ENCODE measurements at regions of chr11 and their contacts with region 1.

Region 1: DNA sequence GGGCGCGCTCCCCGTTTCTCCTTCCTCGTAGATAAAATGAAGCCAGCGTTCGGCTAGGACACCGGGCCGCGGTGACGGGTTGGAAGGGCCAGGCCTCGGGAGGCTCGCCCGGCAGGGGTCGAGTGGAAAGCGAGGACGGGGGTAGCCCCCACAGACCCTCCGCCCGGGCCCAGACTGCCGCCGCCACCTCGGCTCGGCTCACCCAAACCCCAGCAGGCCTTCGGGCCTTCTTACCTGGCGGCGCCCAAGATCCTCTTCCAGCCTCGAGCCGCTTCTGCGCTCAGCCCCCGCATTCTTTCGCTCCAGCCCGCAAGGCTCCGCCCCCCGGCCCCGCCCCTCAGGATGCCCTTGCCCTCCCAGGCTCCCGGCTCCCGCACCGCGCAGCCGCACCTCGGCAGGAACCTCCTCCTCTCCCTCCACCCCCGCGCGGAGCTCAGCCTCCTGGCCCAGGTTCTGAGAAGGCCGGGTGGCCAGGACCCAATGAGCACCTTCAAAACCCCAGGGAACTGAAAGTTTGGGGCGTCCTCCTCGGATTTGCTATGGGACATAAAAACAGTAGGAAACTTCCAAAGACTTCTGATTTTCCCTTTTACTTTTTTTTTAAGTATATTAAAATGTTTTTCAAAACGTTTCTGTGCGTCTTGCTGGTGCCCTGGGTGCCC is at the start of gene CD59:
- DNase-seq: peak; percentile 96
- H3K4me3 ChIP-seq: peak within 1 kb of the TSS; percentile 74 to 98 (median 95)
- H3K27ac ChIP-seq: peak within 1 kb of the TSS; percentile 93
- H3K4me1 ChIP-seq: peaks cover 43% of the 10 kb centered on the region
- H3K27me3 ChIP-seq: no peaks in the 10 kb centered on the region
- CTCF ChIP-seq: no peak
- POLR2A ChIP-seq: peak; percentile 93
- total RNA-seq, gene CD59: 1,084 and 1,141 TPM in 2 replicates

Region 2: DNA sequence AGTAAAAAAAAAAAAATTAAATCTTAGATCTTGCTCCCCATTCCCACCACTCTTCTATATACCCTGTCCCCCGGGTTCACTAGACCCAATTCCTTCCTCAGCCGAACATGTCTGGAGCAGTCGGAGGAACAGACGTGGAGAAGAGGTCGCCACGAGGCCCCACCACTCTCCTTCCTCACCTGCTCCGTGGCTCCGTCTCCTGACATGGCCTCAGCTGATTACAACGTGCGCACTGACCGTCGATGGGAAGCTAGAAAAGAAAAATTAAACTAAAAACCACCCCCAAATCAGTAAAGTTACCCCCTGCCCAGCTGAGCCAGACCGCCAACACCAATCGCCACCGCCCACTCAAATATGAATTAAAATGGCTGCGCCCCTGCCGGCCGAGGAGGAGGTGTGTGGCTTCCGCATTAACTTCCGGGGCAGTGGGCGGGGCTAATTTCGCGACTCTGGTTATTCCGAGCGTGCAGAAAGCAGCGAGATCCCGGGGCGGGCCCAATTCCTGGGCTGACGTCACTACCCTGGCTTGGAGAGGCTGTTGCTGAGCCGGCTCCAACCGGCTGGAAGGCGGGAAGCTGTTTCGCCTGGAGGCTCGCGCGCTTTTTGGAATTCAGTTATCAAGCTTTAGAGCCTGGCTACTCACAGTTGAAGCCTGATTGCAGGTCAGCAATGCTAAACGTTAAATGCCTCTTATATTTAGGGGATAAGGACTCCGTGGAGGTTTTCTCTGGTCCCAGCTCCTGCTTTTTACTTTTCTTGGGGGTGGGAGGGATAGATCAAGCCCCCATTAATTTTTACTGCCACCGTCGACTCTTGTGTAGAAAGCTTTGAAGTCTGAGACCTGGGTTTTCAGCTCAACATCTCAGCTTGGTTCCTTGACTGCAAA is 574.9 kb before region 1 on chr11 and contains the start of gene CSTF3:
- CTCF ChIA-PET with region 1: no interaction called
- POLR2A ChIA-PET with region 1: no interaction called
- dilution Hi-C with region 1: no loop called
- intact Hi-C with region 1: loop called (anchors 5 kb)
- DNase-seq: peak; percentile 99
- H3K4me3 ChIP-seq: peak within 1 kb of the TSS; percentile 62 to 100 (median 100)
- H3K27ac ChIP-seq: peak within 1 kb of the TSS; percentile 92
- H3K4me1 ChIP-seq: peaks cover 23% of the 10 kb centered on the region
- H3K27me3 ChIP-seq: no peaks in the 10 kb centered on the region
- CTCF ChIP-seq: peak; percentile 18 to 38
- POLR2A ChIP-seq: peak; percentile 95
- total RNA-seq, gene CSTF3: 46.6 and 52.3 TPM in 2 replicates

Region 3: GRCh38 chr11:33257897-33258630 is 478.2 kb before region 1 on chr11:
- CTCF ChIA-PET with region 1: no interaction called
- POLR2A ChIA-PET with region 1: no interaction called
- dilution Hi-C with region 1: no loop called
- intact Hi-C with region 1: loop called (anchors 5 kb)
- DNase-seq: peak; percentile 82
- H3K4me3 ChIP-seq: peak overlapping the region; percentile 59 to 93 (median 88)
- H3K27ac ChIP-seq: peak overlapping the region; percentile 98
- H3K4me1 ChIP-seq: peaks cover 18% of the 10 kb centered on the region
- H3K27me3 ChIP-seq: no peaks in the 10 kb centered on the region
- CTCF ChIP-seq: peak; percentile 7 to 29
- POLR2A ChIP-seq: no peak

Region 4: DNA sequence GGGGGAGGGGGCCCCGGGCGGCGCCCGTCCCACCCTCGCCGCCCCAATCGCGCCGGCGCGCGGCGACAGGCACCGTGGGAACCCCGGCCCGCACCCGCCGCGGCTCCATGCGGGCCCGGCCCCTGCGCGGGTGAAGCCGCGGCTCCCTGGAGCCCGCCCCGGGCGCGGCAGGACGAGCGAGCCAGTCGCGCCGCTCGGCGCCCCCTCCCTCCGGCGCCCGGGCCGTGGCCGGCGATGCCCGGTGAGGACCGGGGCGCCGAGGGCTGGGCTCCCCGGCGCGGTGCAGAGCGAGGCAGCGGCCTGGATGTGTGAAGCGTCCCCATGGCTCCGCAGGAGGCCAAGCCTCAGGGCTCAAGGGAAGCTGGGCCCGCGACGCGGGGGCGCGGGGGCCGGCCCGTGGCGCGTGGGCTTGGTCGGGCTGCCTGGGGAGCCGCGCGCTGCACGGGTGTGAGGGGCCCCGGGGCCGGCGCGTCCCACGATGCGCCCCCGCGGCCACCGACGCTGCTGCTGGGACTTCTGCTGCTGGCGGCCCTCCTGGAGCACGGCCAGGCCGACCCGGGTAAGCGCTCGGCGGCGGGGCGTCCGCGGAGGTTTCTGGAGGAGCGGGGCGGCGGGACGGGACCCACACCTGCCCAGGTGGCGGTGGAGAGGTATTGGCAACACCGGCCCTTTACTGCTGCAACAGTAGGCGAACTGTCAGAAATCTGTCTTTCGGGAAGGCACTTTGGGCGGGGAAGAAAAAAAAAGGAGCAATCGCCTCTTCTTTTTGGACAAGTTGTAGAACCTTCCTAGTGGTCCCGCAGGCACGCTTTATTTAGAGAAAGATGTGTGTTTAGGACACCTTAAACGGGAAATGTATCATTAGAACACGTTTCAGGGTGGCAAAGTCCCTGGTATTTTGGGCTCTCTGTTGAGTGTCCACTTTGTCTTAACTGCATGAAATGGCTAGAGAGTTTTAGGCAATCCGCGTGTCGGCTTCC is 359.7 kb before region 1 on chr11:
- CTCF ChIA-PET with region 1: interaction called, 4 read pairs
- POLR2A ChIA-PET with region 1: no interaction called
- dilution Hi-C with region 1: no loop called
- intact Hi-C with region 1: loop called (anchors 5 kb)
- DNase-seq: peak; percentile 25
- H3K4me3 ChIP-seq: peak overlapping the region; percentile 68 to 84 (median 79)
- H3K27ac ChIP-seq: peak overlapping the region; percentile 70
- H3K4me1 ChIP-seq: peaks cover 45% of the 10 kb centered on the region
- H3K27me3 ChIP-seq: no peaks in the 10 kb centered on the region
- CTCF ChIP-seq: no peak
- POLR2A ChIP-seq: no peak

Region 5: GRCh38 chr11:33435216-33435615 is 301.1 kb before region 1 on chr11:
- CTCF ChIA-PET with region 1: no interaction called
- POLR2A ChIA-PET with region 1: no interaction called
- dilution Hi-C with region 1: no loop called
- intact Hi-C with region 1: no loop called
- DNase-seq: no peak
- H3K4me3 ChIP-seq: no peak overlapping the region
- H3K27ac ChIP-seq: no peak overlapping the region
- H3K4me1 ChIP-seq: no peaks in the 10 kb centered on the region
- H3K27me3 ChIP-seq: no peaks in the 10 kb centered on the region
- CTCF ChIP-seq: no peak
- POLR2A ChIP-seq: no peak

Region 6: GRCh38 chr11:33515347-33515746 is 220.9 kb before region 1 on chr11:
- CTCF ChIA-PET with region 1: no interaction called
- POLR2A ChIA-PET with region 1: no interaction called
- dilution Hi-C with region 1: no loop called
- intact Hi-C with region 1: no loop called
- DNase-seq: no peak
- H3K4me3 ChIP-seq: no peak overlapping the region
- H3K27ac ChIP-seq: no peak overlapping the region
- H3K4me1 ChIP-seq: no peaks in the 10 kb centered on the region
- H3K27me3 ChIP-seq: no peaks in the 10 kb centered on the region
- CTCF ChIP-seq: no peak
- POLR2A ChIP-seq: no peak

Region 7: DNA sequence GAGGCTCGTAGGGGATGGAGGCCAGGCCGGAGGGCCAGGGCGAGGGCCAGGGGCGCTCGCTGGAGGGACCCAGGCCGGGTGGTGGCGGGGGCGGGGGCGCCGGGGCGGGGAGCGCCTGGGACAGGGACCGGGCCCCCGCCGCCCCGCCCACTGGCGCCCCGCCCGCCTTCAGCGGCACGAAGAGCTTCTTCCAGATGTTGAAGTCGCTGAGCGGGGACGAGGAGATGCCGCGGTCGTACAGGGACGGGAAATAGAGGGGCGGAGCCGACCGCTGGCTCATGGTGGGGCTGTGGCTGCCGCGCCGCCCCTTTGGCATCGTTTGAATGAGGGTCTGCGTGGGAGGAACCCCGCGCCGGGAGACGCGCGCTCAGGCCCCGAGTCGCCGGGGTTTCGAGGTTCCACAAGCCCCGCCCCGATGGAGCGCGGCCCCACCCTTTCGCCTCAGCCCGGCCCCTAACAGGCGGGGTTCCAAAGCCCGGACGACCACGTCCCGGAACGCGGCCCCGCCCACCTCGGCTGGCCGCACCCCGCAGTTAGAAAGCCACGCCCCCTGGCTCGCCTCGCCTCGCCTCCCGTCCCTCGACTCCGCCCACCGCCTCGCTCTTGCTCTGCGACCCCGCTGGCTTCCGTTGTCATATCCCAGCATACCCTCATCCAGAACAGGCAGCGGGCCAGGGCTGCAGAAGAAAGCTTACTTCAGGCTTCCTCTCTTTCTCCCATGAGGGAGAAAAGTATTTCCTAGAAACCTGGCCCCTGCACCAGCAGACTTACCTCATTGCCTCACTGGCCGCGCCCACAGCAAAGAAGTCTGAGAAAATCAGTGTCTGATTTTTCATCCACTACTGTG is 35.6 kb before region 1 on chr11 and contains the start of gene C11orf91:
- CTCF ChIA-PET with region 1: interaction called, 6 read pairs
- POLR2A ChIA-PET with region 1: interaction called, 9 read pairs
- dilution Hi-C with region 1: no loop called
- intact Hi-C with region 1: loop called (anchors 2 kb)
- DNase-seq: peak; percentile 98
- H3K4me3 ChIP-seq: peak within 1 kb of the TSS in 2 of 3 experiments; percentile 8 to 38
- H3K27ac ChIP-seq: peak within 1 kb of the TSS; percentile 89
- H3K4me1 ChIP-seq: peaks cover 52% of the 10 kb centered on the region
- H3K27me3 ChIP-seq: no peaks in the 10 kb centered on the region
- CTCF ChIP-seq: no peak
- POLR2A ChIP-seq: peak; percentile 88
- total RNA-seq, gene C11orf91: 1.4 and 2.1 TPM in 2 replicates

Region 8: GRCh38 chr11:33716236-33716635 is 20.0 kb before region 1 on chr11:
- CTCF ChIA-PET with region 1: interaction called, 254 read pairs
- POLR2A ChIA-PET with region 1: interaction called, 4 read pairs
- dilution Hi-C with region 1: no loop called
- intact Hi-C with region 1: loop called (anchors 1 kb)
- DNase-seq: peak; percentile 66
- H3K4me3 ChIP-seq: no peak overlapping the region
- H3K27ac ChIP-seq: peak overlapping the region; percentile 0
- H3K4me1 ChIP-seq: peaks cover 29% of the 10 kb centered on the region
- H3K27me3 ChIP-seq: no peaks in the 10 kb centered on the region
- CTCF ChIP-seq: peak; percentile 27 to 41
- POLR2A ChIP-seq: no peak

Region 9: GRCh38 chr11:33722579-33723225 is 13.6 kb before region 1 on chr11:
- CTCF ChIA-PET with region 1: interaction called, 254 read pairs
- POLR2A ChIA-PET with region 1: interaction called, 10 read pairs
- dilution Hi-C with region 1: no loop called
- intact Hi-C with region 1: loop called (anchors 1 kb)
- DNase-seq: peak; percentile 69
- H3K4me3 ChIP-seq: no peak overlapping the region
- H3K27ac ChIP-seq: peak overlapping the region; percentile 99
- H3K4me1 ChIP-seq: peaks cover 60% of the 10 kb centered on the region
- H3K27me3 ChIP-seq: no peaks in the 10 kb centered on the region
- CTCF ChIP-seq: no peak
- POLR2A ChIP-seq: no peak